Transverse colon (tissue), 4 donors: ENCODE measurements at regions of chr19 and their contacts with region 1.

Region 1: DNA sequence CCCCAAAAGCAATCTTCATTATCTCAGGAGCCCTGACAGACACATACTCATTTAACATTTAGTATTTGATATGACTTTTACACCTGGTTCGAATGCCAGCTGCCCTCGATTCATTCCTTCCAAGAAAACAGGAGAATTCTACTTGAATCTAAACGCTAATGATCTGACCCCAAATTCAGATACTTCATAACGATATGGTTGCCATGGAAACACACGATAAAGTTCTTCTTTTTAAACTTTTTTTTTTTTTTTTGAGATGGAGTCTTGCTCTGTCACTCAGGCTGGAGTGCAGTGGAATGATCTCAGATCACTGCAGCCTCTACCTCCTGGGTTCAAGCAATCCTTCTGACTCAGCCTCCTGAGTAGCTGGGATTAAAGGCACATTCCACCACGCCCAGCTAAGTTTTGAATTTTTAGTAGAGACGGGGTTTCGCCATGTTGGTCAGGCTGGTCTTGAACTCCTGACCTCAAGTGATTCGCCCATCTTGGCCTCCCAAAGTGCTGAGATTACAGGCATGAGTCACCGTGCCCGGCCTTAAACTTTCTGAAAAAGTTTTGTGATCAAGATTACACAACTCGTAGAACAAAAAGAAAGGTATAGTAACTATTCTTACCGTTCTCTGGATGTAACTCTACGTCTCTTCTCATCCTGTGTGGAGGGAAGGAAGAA is 21.4 kb downstream of the DNMT1 start:
- DNase-seq: no peak
- H3K4me3 ChIP-seq: no peak overlapping the region
- H3K27ac ChIP-seq: no peak overlapping the region
- H3K4me1 ChIP-seq: no peaks in the 10 kb centered on the region
- H3K27me3 ChIP-seq: no peaks in the 10 kb centered on the region
- CTCF ChIP-seq: no peak
- EP300 ChIP-seq: no peak
- POLR2A ChIP-seq: no peak

Region 2: GRCh38 chr19:8592231-8593009 is 1581.0 kb before region 1 on chr19:
- in situ Hi-C with region 1: no loop called
- intact Hi-C with region 1: loop called (anchors 5 kb)
- DNase-seq: peak; percentile 90
- H3K4me3 ChIP-seq: peak overlapping the region in 2 of 4 donors; percentile 16 to 32
- H3K27ac ChIP-seq: peak overlapping the region in 2 of 4 donors; percentile 11 to 54
- H3K4me1 ChIP-seq: peaks cover 0 to 15% (median 6%) of the 10 kb centered on the region in 4 donors
- H3K27me3 ChIP-seq: peaks cover 4% of the 10 kb centered on the region
- CTCF ChIP-seq: no peak
- EP300 ChIP-seq: no peak
- POLR2A ChIP-seq: no peak

Region 3: DNA sequence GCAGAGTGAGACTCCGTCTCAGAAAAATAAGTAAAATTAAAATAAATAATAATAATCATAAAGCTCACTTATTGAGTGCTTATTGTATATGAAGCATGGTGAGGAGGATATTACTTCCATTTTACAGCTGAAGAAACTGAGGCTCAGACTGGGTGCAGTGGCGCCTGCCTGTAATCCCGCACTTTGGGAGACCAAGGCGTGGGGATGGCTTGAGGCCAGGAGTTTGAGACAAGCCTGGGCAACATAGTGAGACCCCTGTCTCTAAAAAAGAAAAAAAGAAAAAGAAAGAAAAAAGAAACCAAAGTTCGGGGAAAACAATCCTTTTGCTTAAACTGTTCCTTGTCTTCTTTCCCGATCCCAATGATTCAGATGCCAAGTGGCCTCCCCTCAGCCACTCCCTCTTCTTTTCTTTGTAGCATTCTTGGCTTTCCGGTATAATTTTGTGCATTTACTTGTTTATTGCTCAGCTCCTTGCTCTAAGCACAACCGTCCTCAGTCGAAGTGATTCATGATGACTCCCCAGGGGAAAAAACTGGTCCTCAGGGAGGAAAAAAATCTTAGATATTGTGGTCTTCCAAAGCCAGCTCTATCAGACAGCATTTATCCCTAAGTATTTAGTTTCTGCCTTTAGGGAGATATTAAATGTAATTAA is 52.7 kb before region 1 on chr19:
- in situ Hi-C with region 1: no loop called
- intact Hi-C with region 1: no loop called
- DNase-seq: no peak
- H3K4me3 ChIP-seq: peak overlapping the region in 1 of 4 donors; percentile 75
- H3K27ac ChIP-seq: peak overlapping the region; percentile 72 to 89 (median 82)
- H3K4me1 ChIP-seq: peaks cover 6 to 18% (median 15%) of the 10 kb centered on the region in 4 donors
- H3K27me3 ChIP-seq: no peaks in the 10 kb centered on the region
- CTCF ChIP-seq: no peak
- EP300 ChIP-seq: no peak
- POLR2A ChIP-seq: no peak